Activated naive CD4-positive, alpha-beta T cell treated with anti-CD3 and anti-CD28 coated beads for 36 hours (primary cell): ENCODE measurements at regions of chr14 and their contacts with region 1.

Region 1: DNA sequence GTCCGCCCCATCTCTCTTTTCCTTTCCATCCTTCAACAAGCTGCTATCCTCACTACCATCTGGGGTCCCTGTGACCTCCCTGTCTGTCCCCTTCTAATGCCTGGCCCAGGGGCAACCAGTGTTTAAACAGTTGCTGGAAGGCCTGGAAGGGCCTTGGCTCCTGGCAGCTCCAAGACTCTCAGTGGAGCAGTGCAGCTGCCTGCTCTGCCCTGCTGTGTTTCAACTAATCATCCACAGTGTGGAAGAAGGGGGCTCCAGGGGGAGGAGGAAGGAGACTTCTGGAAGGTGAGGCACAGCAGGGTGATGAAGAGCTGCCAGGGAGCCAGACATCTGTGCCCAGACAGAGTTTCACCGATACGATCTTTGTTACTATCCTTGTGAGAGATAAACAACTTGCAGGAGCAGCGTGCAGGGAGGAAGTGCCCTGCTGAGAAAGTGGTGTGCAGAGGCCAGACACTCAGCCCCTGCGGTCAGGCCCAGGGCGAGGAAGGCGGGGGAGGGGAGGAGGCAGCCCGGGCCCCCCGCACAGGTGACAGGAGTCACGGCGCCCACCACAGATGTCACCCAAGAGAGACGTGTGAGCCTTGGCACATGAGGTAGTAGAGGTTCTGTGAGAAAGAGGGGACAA is 1061.8 kb downstream of the BCL11B start:
- DNase-seq: peak; percentile 65
- H3K4me3 Mint-ChIP-seq: peak overlapping the region; percentile 56
- H3K27ac Mint-ChIP-seq: peak overlapping the region; percentile 88
- H3K4me1 Mint-ChIP-seq: peaks cover 91% of the 10 kb centered on the region
- H3K27me3 Mint-ChIP-seq: no peaks in the 10 kb centered on the region

Region 2: DNA sequence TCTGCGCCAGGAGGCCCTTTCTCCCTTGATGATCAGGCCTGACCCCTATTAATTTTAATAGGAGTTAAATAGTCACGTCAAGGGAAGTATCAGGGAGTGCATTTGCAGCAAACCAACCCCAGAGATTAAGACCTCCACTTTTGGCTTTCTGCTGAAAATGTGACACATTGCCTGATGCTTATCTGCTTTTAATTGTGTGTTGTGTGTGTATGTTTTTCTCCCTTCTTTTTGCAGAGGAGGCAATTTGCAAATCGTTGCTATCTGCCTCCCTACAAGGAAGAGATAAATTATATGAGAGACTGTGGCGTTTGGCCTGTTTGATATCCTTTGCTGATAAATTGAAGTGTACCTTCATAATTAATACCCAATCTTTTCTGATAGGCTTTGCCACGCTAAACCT is 590.1 kb before region 1 on chr14:
- CTCF ChIA-PET with region 1: no interaction called
- intact Hi-C with region 1: loop called (anchors 10 kb)
- DNase-seq: no peak
- H3K4me3 Mint-ChIP-seq: peak overlapping the region; percentile 72
- H3K27ac Mint-ChIP-seq: peak overlapping the region; percentile 76
- H3K4me1 Mint-ChIP-seq: peaks cover 46% of the 10 kb centered on the region
- H3K27me3 Mint-ChIP-seq: no peaks in the 10 kb centered on the region

Region 3: GRCh38 chr14:98198385-98198784 is 11.8 kb before region 1 on chr14:
- CTCF ChIA-PET with region 1: interaction called, 4 read pairs
- intact Hi-C with region 1: loop called (anchors 1 kb)
- DNase-seq: peak; percentile 60
- H3K4me3 Mint-ChIP-seq: peak overlapping the region; percentile 9
- H3K27ac Mint-ChIP-seq: peak overlapping the region; percentile 73
- H3K4me1 Mint-ChIP-seq: peaks cover 85% of the 10 kb centered on the region
- H3K27me3 Mint-ChIP-seq: no peaks in the 10 kb centered on the region